GM18951 (cell line): ENCODE measurements at regions of chr7 and their contacts with region 1.

Region 1: GRCh38 chr7:137656227-137656849 is 190.4 kb downstream of the DGKI start:
- POLR2A ChIP-seq: no peak

Region 2: GRCh38 chr7:137538361-137538762 is 118.0 kb before region 1 on chr7:
- in situ Hi-C with region 1: no loop called
- POLR2A ChIP-seq: no peak

Region 3: DNA sequence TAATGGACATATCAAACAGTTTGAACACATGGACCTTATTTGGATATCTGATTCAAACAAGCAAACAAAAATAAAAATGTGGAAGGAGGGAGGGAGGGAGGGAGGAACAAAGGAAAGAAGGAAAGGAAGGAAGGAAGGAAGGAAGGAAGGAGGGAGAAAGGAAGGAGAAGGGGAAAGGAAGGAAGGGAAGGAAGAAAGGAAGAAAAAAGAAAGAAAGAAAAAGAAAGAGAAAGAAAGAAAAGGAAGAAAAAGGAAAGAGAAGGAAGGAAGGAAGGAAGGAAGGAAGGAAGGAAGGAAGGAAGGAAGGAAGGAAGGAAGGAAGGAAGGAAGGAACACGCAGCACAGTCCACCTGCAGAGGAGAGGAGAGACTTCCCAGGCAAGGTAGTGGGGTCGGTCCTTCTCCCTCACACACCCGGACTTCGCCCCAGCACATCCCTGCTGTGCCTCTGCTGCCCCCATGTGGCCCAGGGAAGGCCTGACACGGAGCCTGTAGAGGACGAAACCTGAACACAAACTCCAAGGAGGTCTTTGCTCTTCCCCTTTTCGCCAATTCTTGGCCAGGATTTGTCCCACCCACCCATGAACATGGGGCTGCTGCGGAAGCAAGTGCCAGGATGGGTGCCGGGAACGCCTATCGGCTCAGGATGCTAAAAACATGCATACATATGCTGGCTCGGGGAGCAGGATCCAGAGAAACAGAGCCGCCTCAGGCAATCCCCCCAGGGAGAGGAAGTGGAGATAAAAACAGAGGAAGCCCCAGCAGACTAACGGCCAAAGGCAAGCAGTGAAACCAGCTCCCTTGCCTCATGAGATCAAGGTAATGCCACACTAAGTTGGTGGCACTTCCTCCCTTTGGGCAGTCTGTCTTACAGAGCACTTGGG is 242.7 kb after region 1 on chr7:
- in situ Hi-C with region 1: loop called (anchors 10 kb)
- POLR2A ChIP-seq: no peak

Region 4: DNA sequence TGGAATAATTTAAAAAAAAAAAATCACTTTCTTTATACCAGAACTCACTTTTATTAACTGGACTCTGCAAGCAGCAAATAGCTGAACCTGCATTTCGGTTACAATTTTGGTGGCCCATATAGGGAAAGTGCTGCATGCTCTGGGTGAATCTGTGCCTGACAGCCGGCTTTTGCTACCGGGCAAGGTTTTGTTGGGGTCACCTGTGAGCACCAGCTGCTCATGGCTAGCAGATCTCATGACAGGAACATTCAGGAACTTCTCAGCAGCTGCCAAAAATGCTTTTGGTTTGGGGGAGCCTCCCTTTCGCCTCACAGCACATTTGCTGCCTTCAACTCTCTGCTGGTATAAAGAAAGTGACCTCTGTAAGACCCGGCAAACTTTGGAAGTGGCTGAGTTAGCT is 358.8 kb after region 1 on chr7:
- in situ Hi-C with region 1: loop called (anchors 10 kb)
- POLR2A ChIP-seq: no peak